ENCODE measurements at regions of chr12 and their contacts with region 1.

Region 1: GRCh38 chr12:124836759-124837158 is 26.9 kb downstream of the SCARB1 start:
- DNase-seq: no peak
- H3K4me3 ChIP-seq: no peak overlapping the region
- H3K27ac ChIP-seq: no peak overlapping the region
- H3K27me3 ChIP-seq: no peaks in the 10 kb centered on the region
- CTCF ChIP-seq: no peak

Region 2: GRCh38 chr12:124898200-124898922 is 61.6 kb after region 1 on chr12:
- CTCF ChIA-PET with region 1: interaction called, 19 read pairs
- POLR2A ChIA-PET with region 1: interaction called, 6 read pairs
- DNase-seq: no peak
- H3K4me3 ChIP-seq: no peak overlapping the region
- H3K27ac ChIP-seq: no peak overlapping the region
- H3K27me3 ChIP-seq: no peaks in the 10 kb centered on the region
- CTCF ChIP-seq: peak; percentile 45